Left colon (tissue), 2 donors: ENCODE measurements at regions of chr1 and their contacts with region 1.

Region 1: DNA sequence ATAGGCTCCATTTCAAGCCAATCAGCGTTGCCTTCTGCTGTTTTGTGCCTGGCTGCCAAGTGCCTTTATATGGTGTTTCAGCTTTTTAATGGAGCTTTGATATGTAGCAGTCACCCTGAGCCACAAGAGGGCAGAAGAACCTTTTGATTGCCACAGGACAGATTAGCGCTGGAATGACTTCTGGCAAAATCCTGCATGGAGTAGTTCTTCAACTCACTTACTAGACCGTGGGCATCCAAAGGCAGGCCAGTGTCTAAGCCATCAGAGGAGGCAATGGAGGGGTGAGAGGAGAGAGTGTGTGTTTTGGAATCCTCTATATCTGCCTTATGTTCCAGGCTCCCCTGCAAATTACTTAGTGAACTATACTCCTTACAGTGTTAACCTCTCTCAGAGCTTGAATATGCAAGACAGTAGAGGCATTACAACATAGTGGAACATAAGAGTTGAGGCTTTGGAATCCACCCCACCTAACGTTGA is 56.2 kb downstream of the ST3GAL3 start:
- DNase-seq: peak; percentile 64 to 65
- ATAC-seq: peak; percentile 96

Region 2: GRCh38 chr1:43396059-43396458 is 367.5 kb before region 1 on chr1:
- intact Hi-C with region 1: no loop called
- DNase-seq: no peak
- ATAC-seq: peak; percentile 49

Region 3: GRCh38 chr1:43934101-43934985 is 170.8 kb after region 1 on chr1:
- intact Hi-C with region 1: loop called (anchors 5 to 10 kb)
- DNase-seq: peak; percentile 58 to 86
- ATAC-seq: peak; percentile 61

Region 4: DNA sequence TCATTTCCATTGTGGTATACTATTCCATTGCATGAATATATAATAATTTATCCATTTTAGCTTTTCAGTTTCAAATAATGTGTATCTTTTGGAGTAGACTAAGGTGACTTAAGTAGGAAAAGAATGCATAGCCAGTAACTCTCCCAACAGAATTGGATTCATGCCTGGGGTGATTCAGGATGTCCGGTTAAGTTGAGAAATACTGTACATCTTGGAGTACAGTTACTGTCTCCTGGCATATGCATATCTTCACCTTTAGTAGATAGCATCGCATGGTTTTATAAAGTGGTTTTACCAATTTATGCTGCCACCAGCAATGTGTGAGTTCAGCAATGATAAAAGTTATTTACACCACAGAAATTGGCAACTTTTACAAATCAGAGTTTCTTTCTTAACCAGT is 286.3 kb after region 1 on chr1:
- intact Hi-C with region 1: loop called in 1 of 2 experiments (anchors 10 kb)
- DNase-seq: no peak
- ATAC-seq: no peak